B cell (primary cell): ENCODE measurements at regions of chr6 and their contacts with region 1.

Region 1: DNA sequence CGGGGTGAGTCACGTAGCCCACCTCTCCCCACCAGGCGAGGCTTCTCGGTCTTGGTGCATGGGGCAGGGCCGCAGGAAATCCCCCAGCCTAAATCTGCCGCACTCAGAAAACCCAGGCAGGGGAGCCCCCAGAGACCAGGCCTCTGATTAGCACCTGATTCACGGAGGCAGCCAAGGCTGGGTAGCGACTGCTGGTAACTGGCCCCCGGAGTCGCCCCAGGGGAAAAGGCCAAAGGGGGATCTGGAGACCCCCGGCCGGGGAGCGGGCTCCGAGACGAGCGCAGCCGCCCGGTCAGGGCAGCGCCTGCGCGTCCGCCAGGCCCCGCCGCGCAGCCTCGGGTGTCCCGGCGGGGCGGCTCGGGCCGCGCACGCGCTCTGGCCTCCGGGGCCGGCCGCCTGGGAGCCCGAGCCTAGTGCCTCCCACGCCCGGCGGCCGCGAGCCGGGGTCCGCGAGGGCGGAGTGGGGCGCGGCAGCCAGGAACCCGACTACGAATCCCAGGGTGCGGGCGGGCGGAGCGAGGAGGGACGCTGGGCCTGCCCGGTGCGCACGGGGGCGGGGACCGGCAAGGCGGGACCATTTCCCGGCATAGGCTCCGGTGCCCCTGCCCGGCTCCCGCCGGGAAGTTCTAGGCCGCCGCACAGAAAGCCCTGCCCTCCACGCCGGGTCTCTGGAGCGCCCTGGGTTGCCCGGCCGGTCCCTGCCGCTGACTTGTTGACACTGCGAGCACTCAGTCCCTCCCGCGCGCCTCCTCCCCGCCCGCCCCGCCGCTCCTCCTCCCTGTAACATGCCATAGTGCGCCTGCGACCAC is at the start of gene DUSP22:
- DNase-seq: peak; percentile 97
- ATAC-seq: peak; percentile 55
- H3K4me3 ChIP-seq: peak within 1 kb of the TSS; percentile 50 to 87 (median 78)
- H3K4me3 Mint-ChIP-seq: peak within 1 kb of the TSS; percentile 99
- H3K27ac ChIP-seq: peak within 1 kb of the TSS; percentile 93 to 95
- H3K27ac Mint-ChIP-seq: peak within 1 kb of the TSS; percentile 96
- H3K4me1 ChIP-seq: peaks cover 81 to 90% of the 10 kb centered on the region in 2 donors
- H3K4me1 Mint-ChIP-seq: peaks cover 58% of the 10 kb centered on the region
- H3K27me3 ChIP-seq: no peaks in the 10 kb centered on the region
- H3K27me3 Mint-ChIP-seq: no peaks in the 10 kb centered on the region
- CTCF ChIP-seq: no peak
- total RNA-seq, gene DUSP22: 133 and 134 TPM in 2 replicates

Region 2: GRCh38 chr6:217048-217659 is 74.7 kb before region 1 on chr6:
- CTCF ChIA-PET with region 1: interaction called, 7 read pairs
- POLR2A ChIA-PET with region 1: interaction called, 8 read pairs
- intact Hi-C with region 1: loop called (anchors 2 kb)
- DNase-seq: peak; percentile 49
- ATAC-seq: no peak
- H3K4me3 ChIP-seq: no peak overlapping the region
- H3K4me3 Mint-ChIP-seq: peak overlapping the region; percentile 58
- H3K27ac ChIP-seq: no peak overlapping the region
- H3K27ac Mint-ChIP-seq: peak overlapping the region; percentile 44
- H3K4me1 ChIP-seq: peaks cover 43 to 62% of the 10 kb centered on the region in 2 donors
- H3K4me1 Mint-ChIP-seq: peaks cover 69% of the 10 kb centered on the region
- H3K27me3 ChIP-seq: peaks cover 0 to 2% (median 0%) of the 10 kb centered on the region in 4 experiments
- H3K27me3 Mint-ChIP-seq: no peaks in the 10 kb centered on the region
- CTCF ChIP-seq: peak; percentile 50

Region 3: GRCh38 chr6:259901-260508 is 31.9 kb before region 1 on chr6:
- CTCF ChIA-PET with region 1: interaction called, 6 read pairs
- POLR2A ChIA-PET with region 1: no interaction called
- intact Hi-C with region 1: loop called (anchors 5 kb)
- DNase-seq: peak; percentile 39
- ATAC-seq: peak; percentile 31
- H3K4me3 ChIP-seq: peak overlapping the region in 4 of 5 experiments; percentile 13 to 40 (median 30)
- H3K4me3 Mint-ChIP-seq: peak overlapping the region; percentile 59
- H3K27ac ChIP-seq: peak overlapping the region; percentile 21 to 74
- H3K27ac Mint-ChIP-seq: peak overlapping the region; percentile 16
- H3K4me1 ChIP-seq: peaks cover 57 to 58% of the 10 kb centered on the region in 2 donors
- H3K4me1 Mint-ChIP-seq: peaks cover 69% of the 10 kb centered on the region
- H3K27me3 ChIP-seq: no peaks in the 10 kb centered on the region
- H3K27me3 Mint-ChIP-seq: no peaks in the 10 kb centered on the region
- CTCF ChIP-seq: no peak

Region 4: DNA sequence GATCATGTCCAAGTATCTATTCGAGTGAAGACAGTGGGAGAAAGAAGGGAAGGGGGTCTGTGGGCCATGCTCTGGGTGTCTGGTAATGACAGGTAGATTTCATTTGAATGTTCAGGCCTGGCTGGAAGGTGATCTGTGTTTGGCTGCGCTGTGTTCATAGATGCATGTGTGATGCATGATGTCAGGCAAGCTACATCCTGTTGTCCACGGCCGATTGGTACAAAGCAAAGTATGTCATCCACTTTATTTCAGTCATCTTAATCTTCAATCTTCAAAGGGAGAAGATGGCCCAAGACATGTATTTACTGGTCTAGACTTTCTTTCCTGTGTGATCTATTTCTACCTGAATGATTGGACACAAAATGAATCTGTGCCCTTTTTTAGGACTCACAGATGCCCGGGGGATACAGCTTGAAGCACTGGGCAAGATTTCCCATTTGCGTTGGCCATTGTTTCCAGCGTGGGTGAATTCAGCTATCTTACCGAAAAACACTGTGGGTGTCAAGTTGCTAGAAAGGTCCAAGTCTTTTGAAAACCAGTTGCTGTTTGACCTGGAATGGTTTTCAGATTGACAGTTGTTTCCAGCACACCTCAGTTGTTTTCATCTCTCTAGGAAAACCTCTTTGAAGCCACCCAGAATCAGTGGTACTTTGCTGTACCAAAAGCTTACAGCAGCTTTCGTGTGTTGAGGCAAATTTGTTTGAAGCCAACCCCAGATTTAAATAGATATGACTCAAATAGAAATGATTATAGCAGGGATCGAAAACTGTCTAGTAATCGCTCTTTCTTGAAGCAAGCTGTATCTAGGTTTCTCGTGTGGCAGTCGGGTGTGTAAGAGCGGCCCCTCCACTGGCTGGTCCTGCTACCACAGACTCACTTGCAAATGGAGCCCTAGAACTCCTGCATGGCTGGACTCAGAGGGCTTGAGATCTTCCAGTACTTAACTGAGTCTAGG is 27.6 kb after region 1 on chr6:
- CTCF ChIA-PET with region 1: interaction called, 12 read pairs
- POLR2A ChIA-PET with region 1: interaction called, 20 read pairs
- intact Hi-C with region 1: no loop called
- DNase-seq: no peak
- ATAC-seq: no peak
- H3K4me3 ChIP-seq: no peak overlapping the region
- H3K4me3 Mint-ChIP-seq: peak overlapping the region; percentile 40
- H3K27ac ChIP-seq: peak overlapping the region in 1 of 2 donors; percentile 13
- H3K27ac Mint-ChIP-seq: peak overlapping the region; percentile 73
- H3K4me1 ChIP-seq: peaks cover 90 to 94% of the 10 kb centered on the region in 2 donors
- H3K4me1 Mint-ChIP-seq: peaks cover 46% of the 10 kb centered on the region
- H3K27me3 ChIP-seq: no peaks in the 10 kb centered on the region
- H3K27me3 Mint-ChIP-seq: no peaks in the 10 kb centered on the region
- CTCF ChIP-seq: no peak

Region 5: GRCh38 chr6:356828-357251 is 64.9 kb after region 1 on chr6:
- CTCF ChIA-PET with region 1: interaction called, 6 read pairs
- POLR2A ChIA-PET with region 1: interaction called, 7 read pairs
- intact Hi-C with region 1: loop called (anchors 2 kb)
- DNase-seq: peak; percentile 79
- ATAC-seq: peak; percentile 81
- H3K4me3 ChIP-seq: no peak overlapping the region
- H3K4me3 Mint-ChIP-seq: peak overlapping the region; percentile 77
- H3K27ac ChIP-seq: peak overlapping the region; percentile 42 to 75
- H3K27ac Mint-ChIP-seq: peak overlapping the region; percentile 98
- H3K4me1 ChIP-seq: peaks cover 48 to 69% of the 10 kb centered on the region in 2 donors
- H3K4me1 Mint-ChIP-seq: peaks cover 66% of the 10 kb centered on the region
- H3K27me3 ChIP-seq: no peaks in the 10 kb centered on the region
- H3K27me3 Mint-ChIP-seq: no peaks in the 10 kb centered on the region
- CTCF ChIP-seq: no peak

Region 6: DNA sequence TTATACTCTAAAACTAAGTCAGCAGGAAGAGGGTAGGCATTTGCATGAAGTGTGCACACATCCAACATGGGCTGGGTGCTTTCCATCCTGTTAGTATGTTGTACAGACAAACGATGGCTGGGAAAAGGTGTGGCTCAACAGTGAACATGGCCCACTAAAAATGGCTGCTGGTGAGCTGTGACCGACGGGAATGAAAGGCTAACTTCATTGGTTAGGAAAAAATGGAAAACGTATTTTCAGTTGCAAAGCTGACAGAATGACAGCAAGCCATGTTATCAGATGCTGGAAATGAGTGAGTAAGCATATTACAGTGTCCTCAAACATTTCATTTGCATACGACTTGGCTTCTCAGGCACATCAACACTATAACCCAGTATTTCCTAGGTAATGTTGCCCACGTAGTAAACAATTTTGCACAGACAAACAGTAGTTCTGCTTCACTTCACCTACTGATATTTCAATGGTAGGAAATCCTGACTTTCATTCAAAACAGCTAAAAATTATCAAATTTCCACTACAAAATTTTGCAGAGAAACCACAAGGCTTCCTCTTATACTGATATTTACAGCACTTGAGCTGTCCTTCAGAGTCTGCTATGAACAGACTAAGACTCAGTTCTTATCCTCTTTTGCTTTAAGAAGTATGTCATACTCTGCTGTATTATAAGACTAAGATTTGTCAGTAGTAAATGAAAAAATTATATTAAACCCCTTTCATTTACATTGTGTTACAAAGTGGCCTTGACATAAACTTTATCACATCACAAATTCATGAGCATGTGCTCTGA is 198.5 kb after region 1 on chr6:
- CTCF ChIA-PET with region 1: interaction called, 3 read pairs
- POLR2A ChIA-PET with region 1: no interaction called
- intact Hi-C with region 1: loop called (anchors 1 kb)
- DNase-seq: peak; percentile 56
- ATAC-seq: peak; percentile 29
- H3K4me3 ChIP-seq: peak overlapping the region in 1 of 5 experiments; percentile 8
- H3K4me3 Mint-ChIP-seq: peak overlapping the region; percentile 52
- H3K27ac ChIP-seq: peak overlapping the region; percentile 51 to 55
- H3K27ac Mint-ChIP-seq: peak overlapping the region; percentile 89
- H3K4me1 ChIP-seq: peaks cover 47 to 56% of the 10 kb centered on the region in 2 donors
- H3K4me1 Mint-ChIP-seq: peaks cover 58% of the 10 kb centered on the region
- H3K27me3 ChIP-seq: no peaks in the 10 kb centered on the region
- H3K27me3 Mint-ChIP-seq: no peaks in the 10 kb centered on the region
- CTCF ChIP-seq: no peak